Left ventricle myocardium inferior (tissue), 1 donor: ENCODE measurements at regions of chr1 and their contacts with region 1.

Region 1: GRCh38 chr1:170967042-170967910 is 31.9 kb downstream of the MROH9 start:
- DNase-seq: no peak
- H3K4me3 ChIP-seq: no peak overlapping the region
- H3K27ac ChIP-seq: no peak overlapping the region
- H3K4me1 ChIP-seq: no peaks in the 10 kb centered on the region
- H3K27me3 ChIP-seq: no peaks in the 10 kb centered on the region
- CTCF ChIP-seq: peak; percentile 71

Region 2: DNA sequence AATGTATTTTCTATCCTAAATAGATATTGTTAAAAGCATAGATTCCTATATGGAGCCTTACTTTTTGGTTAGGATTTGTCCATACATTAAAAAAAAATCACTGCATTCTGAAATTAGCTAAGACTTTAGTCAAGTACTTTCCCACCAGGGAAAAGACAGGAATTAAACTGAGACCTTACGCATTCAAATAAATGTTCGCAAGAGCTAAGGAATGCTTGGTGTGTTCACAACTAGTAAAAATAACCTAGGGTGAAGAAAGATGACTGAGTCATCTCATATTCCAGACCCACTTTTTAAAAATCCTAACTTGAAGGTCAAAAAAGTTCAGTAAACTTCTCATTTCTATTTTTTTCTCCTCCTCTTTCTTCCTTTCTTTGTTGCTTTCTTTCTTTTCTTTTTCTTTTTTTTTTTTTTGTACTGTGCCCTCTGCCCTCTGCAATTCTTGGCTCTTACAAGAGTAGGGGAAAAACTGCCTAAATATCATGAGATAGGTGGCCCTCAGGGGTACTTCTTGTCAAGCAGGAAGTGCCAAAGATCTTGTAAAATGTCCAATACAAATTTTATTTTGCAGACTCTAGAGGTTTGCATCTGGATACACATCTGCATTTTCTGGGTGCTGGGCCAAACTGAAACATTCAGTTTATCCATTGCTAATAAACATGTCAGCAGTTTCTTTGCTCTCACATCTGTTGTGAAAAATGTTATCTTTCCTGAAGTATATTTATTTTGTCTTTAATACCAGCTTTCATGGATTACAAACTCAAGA is 556.7 kb before region 1 on chr1:
- intact Hi-C with region 1: no loop called
- DNase-seq: no peak
- H3K4me3 ChIP-seq: no peak overlapping the region
- H3K27ac ChIP-seq: peak overlapping the region; percentile 62
- H3K4me1 ChIP-seq: peaks cover 30% of the 10 kb centered on the region
- H3K27me3 ChIP-seq: no peaks in the 10 kb centered on the region
- CTCF ChIP-seq: no peak

Region 3: GRCh38 chr1:171226747-171227370 is 259.6 kb after region 1 on chr1:
- intact Hi-C with region 1: loop called (anchors 5 kb)
- DNase-seq: no peak
- H3K4me3 ChIP-seq: no peak overlapping the region
- H3K27ac ChIP-seq: no peak overlapping the region
- H3K4me1 ChIP-seq: peaks cover 18% of the 10 kb centered on the region
- H3K27me3 ChIP-seq: no peaks in the 10 kb centered on the region
- CTCF ChIP-seq: peak; percentile 91

Region 4: GRCh38 chr1:171233190-171233589 is 265.9 kb after region 1 on chr1:
- intact Hi-C with region 1: loop called (anchors 5 kb)
- DNase-seq: no peak
- H3K4me3 ChIP-seq: no peak overlapping the region
- H3K27ac ChIP-seq: no peak overlapping the region
- H3K4me1 ChIP-seq: no peaks in the 10 kb centered on the region
- H3K27me3 ChIP-seq: peaks cover 7% of the 10 kb centered on the region
- CTCF ChIP-seq: no peak